Left colon (tissue), 2 donors: ENCODE measurements at regions of chr4 and their contacts with region 1.

Region 1: GRCh38 chr4:88514557-88515511 is 8.7 kb downstream of the PYURF start:
- DNase-seq: no peak
- ATAC-seq: peak; percentile 85

Region 2: DNA sequence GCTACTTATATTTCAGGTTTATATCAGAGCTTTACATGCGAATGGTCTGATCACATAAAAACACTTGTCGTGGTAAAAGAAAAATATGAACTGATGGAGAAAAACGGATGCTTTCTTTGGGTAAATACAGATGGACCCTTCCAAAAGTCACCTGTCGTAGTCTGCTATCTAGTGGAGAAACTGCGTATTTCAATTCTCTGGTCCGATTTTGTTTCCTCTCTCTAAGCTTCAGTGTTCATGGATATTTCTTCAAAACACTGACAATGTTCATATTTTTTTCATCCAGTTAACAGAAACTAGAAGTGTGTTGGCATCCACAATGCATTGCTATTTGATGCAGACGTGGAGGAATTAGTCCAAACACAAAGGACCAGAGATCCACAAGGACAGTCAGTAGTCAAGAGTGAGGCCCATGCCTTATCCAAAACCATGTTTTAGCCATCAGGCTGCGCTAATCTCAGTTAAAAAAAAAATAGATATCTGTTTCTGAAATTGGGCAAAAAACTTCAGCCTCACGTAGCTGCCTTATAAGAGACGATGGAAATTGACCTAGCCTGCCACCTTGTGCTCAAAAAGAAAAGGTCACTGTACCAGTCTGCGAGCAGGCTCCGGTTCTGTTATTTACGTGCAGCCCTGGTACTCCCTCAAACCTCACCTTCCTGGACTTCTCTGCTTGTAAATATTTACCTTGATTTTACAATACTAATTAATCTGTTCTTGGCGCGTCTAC is 666.0 kb before region 1 on chr4:
- intact Hi-C with region 1: loop called in 1 of 2 experiments (anchors 10 kb)
- DNase-seq: peak in 1 of 2 donors; percentile 23
- ATAC-seq: peak; percentile 74

Region 3: GRCh38 chr4:88033309-88033708 is 481.5 kb before region 1 on chr4:
- intact Hi-C with region 1: loop called in 1 of 2 experiments (anchors 10 kb)
- DNase-seq: peak in 1 of 2 donors; percentile 22
- ATAC-seq: peak; percentile 79

Region 4: GRCh38 chr4:88217920-88218319 is 296.9 kb before region 1 on chr4:
- intact Hi-C with region 1: loop called (anchors 2 to 10 kb)
- DNase-seq: no peak
- ATAC-seq: no peak

Region 5: DNA sequence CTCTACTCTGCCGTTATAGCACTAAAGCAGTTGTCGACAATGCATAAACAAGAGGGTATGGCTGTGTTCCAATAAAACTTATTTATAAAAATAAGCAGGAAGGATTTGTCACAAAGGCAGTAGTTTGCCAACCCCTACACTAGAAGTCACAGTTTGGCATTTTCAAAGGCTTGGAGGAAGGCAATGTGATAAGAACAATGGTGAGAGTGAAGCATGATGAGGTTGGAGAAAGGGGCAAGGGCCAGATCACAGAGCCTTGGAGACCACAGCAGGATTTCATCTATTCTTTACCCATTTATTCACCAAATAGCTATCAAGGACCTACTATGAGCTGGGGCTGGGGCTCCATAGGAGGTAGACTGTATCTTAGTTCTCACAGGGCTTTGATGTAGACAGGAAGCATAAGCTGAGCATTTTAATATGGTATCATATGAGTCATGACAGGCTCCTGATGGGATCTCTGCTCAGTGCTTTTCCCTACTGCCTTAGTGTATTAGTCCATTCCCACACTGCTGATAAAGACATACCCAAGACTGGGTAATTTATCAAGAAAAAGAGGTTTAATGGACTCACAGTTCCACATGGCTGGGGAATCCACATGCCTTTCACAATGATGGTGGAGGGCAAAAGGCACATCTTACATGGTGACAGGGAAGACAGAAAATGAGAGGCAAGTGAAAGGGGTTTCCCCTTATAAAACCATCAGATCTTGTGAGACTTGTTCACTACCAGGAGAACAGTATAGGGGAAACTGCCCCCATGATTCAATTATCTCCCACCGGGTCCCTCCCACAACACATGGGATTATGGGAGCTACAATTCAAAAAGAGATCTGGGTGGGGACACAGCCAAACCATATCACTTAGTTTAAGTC is 289.4 kb before region 1 on chr4:
- intact Hi-C with region 1: loop called in 1 of 2 experiments (anchors 10 kb)
- DNase-seq: no peak
- ATAC-seq: no peak

Region 6: GRCh38 chr4:88366460-88366859 is 148.4 kb before region 1 on chr4:
- intact Hi-C with region 1: loop called in 1 of 2 experiments (anchors 5 kb)
- DNase-seq: no peak
- ATAC-seq: no peak

Region 7: GRCh38 chr4:88706574-88706973 is 191.7 kb after region 1 on chr4:
- intact Hi-C with region 1: no loop called
- DNase-seq: no peak
- ATAC-seq: no peak